Testis (tissue), 5 donors: ENCODE measurements at regions of chr1 and their contacts with region 1.

Region 1: GRCh38 chr1:228139944-228140656 is at the start of gene GUK1:
- DNase-seq: peak; percentile 100
- H3K4me3 ChIP-seq: peak within 1 kb of the TSS; percentile 94 to 99
- H3K27ac ChIP-seq: peak within 1 kb of the TSS; percentile 97 to 99
- H3K4me1 ChIP-seq: peaks cover 26% of the 10 kb centered on the region
- H3K27me3 ChIP-seq: no peaks in the 10 kb centered on the region
- CTCF ChIP-seq: peak in 2 of 3 experiments; percentile 11 to 62
- POLR2A ChIP-seq: peak; percentile 80
- total RNA-seq, gene GUK1: 298 to 343 TPM

Region 2: DNA sequence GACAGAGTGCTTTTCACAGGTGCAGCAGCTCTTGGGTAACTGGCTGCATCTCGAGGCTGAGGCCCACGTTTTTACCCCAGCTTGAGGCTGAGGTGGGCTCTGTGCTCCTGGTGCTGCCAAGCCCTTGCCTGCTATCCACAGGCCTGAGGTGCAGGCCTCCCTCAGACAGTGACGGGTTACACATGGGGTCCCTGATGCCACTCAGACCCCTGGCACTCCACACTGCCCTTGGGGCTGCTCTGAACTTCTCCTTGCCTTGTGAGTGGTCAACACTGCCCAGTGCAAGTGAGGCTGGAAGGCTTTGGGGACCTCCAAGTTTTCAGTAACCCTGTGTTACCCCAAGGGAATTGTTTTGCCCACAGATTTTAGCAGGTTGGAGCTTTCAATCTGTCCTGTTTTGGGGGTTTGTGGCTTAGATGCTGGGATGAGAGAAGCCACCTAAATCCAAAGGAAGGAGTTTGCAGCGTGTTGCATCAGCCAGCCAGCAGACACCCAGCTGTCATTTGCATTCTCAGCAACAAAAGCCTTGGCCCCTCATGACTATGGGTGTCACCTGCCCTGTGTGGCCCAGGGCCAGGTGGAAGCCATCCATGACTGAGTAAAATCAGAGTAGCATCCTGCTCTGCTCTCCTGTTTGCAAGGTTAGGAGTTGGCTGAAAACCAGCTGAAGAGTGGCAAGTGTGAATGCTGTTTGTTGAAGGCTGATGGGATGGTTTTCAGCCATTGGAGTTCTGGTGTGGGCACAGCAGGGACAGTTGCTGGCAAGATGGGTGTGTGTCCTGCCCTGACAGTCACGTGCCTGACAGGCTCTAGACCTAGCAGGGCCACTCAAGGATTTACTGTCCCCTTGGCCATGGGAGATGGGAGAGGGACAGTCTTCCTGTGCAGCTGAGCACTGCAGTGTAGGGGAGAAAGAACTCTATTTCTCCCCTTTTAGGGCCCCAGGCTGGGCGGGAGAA is 350.3 kb after region 1 on chr1:
- intact Hi-C with region 1: loop called (anchors 10 kb)
- DNase-seq: no peak
- H3K4me3 ChIP-seq: no peak overlapping the region
- H3K27ac ChIP-seq: no peak overlapping the region
- H3K4me1 ChIP-seq: peaks cover 10% of the 10 kb centered on the region
- H3K27me3 ChIP-seq: no peaks in the 10 kb centered on the region
- CTCF ChIP-seq: no peak
- POLR2A ChIP-seq: no peak